Caco-2 (cell line): ENCODE measurements at regions of chr2 and their contacts with region 1.

Region 1: GRCh38 chr2:15984368-15985255 is 44.3 kb downstream of the MYCN start:
- DNase-seq: no peak
- H3K4me3 ChIP-seq: no peak overlapping the region
- H3K4me3 Mint-ChIP-seq: no peak overlapping the region
- H3K27ac Mint-ChIP-seq: no peak overlapping the region
- H3K4me1 ChIP-seq: peaks cover 13% of the 10 kb centered on the region
- H3K4me1 Mint-ChIP-seq: peaks cover 7% of the 10 kb centered on the region
- H3K27me3 ChIP-seq: no peaks in the 10 kb centered on the region
- H3K27me3 Mint-ChIP-seq: no peaks in the 10 kb centered on the region
- CTCF ChIP-seq: no peak

Region 2: GRCh38 chr2:15730545-15731212 is 253.9 kb before region 1 on chr2:
- CTCF ChIA-PET with region 1: no interaction called
- POLR2A ChIA-PET with region 1: no interaction called
- intact Hi-C with region 1: no loop called
- DNase-seq: no peak
- H3K4me3 ChIP-seq: no peak overlapping the region
- H3K4me3 Mint-ChIP-seq: no peak overlapping the region
- H3K27ac Mint-ChIP-seq: no peak overlapping the region
- H3K4me1 ChIP-seq: peaks cover 42% of the 10 kb centered on the region
- H3K4me1 Mint-ChIP-seq: peaks cover 49% of the 10 kb centered on the region
- H3K27me3 ChIP-seq: no peaks in the 10 kb centered on the region
- H3K27me3 Mint-ChIP-seq: no peaks in the 10 kb centered on the region
- CTCF ChIP-seq: no peak

Region 3: GRCh38 chr2:16012619-16013358 is 28.2 kb after region 1 on chr2:
- CTCF ChIA-PET with region 1: no interaction called
- POLR2A ChIA-PET with region 1: interaction called, 3 read pairs
- intact Hi-C with region 1: loop called (anchors 2 kb)
- DNase-seq: peak; percentile 83
- H3K4me3 ChIP-seq: peak overlapping the region; percentile 26; the same call in 1 of the 2 replicates
- H3K4me3 Mint-ChIP-seq: peak overlapping the region; percentile 75
- H3K27ac Mint-ChIP-seq: peak overlapping the region; percentile 96
- H3K4me1 ChIP-seq: peaks cover 18% of the 10 kb centered on the region; the same call in 1 of the 2 replicates
- H3K4me1 Mint-ChIP-seq: peaks cover 26% of the 10 kb centered on the region
- H3K27me3 ChIP-seq: no peaks in the 10 kb centered on the region
- H3K27me3 Mint-ChIP-seq: no peaks in the 10 kb centered on the region
- CTCF ChIP-seq: no peak

Region 4: DNA sequence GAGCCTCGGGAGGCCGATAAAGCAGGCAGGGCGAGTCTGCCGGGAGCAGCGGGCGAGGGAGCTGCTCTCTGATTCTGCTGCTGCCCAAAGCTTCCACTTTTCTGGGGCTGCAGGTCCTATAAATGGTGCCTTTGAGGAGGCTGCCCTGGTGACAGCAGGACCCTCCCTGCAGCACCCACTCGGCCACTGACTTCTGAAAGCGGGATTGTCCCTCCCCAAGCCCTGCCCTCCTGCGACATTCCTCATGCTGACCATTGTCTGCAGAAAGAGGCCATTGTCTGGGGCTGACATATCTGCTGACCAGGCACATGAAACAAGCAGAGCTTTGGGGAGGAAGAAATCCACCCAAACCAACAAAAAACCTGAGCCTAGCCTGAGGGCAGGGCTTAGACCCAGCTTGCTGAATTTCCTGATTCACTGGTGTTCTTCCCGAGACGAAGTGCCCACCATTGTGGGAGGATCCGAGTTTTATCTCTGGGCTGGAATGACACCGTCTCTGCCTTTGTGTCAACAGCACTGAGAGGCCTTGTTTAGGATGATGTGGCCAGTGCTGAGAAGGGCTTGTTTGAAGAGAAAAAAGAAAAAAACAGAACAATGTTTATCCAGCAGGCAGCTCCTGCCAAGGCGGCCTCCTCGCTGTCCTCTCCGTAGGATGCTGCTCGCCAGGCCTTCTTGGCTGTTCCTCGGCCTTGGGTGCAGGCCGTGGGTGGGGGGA is 85.5 kb after region 1 on chr2:
- CTCF ChIA-PET with region 1: no interaction called
- POLR2A ChIA-PET with region 1: no interaction called
- intact Hi-C with region 1: loop called (anchors 5 kb)
- DNase-seq: peak; percentile 68 to 77
- H3K4me3 ChIP-seq: no peak overlapping the region
- H3K4me3 Mint-ChIP-seq: no peak overlapping the region
- H3K27ac Mint-ChIP-seq: peak overlapping the region; percentile 81
- H3K4me1 ChIP-seq: peaks cover 45% of the 10 kb centered on the region
- H3K4me1 Mint-ChIP-seq: peaks cover 34% of the 10 kb centered on the region
- H3K27me3 ChIP-seq: no peaks in the 10 kb centered on the region
- H3K27me3 Mint-ChIP-seq: no peaks in the 10 kb centered on the region
- CTCF ChIP-seq: no peak